Naive thymus-derived CD4-positive, alpha-beta T cell (primary cell): ENCODE measurements at regions of chr7 and their contacts with region 1.

Region 1: GRCh38 chr7:87152107-87152844 is at the start of gene DMTF1:
- DNase-seq: peak; percentile 76 to 85 (median 83)
- ATAC-seq: peak; percentile 91
- H3K4me3 ChIP-seq: peak within 1 kb of the TSS; percentile 72
- H3K4me3 Mint-ChIP-seq: peak within 1 kb of the TSS; percentile 87 to 99 (median 97)
- H3K27ac ChIP-seq: peak within 1 kb of the TSS; percentile 95
- H3K27ac Mint-ChIP-seq: peak within 1 kb of the TSS; percentile 96 to 100 (median 98)
- H3K4me1 ChIP-seq: peaks cover 27% of the 10 kb centered on the region in 2 donors
- H3K4me1 Mint-ChIP-seq: peaks cover 25 to 53% (median 47%) of the 10 kb centered on the region in 7 donors
- H3K27me3 ChIP-seq: no peaks in the 10 kb centered on the region
- H3K27me3 Mint-ChIP-seq: no peaks in the 10 kb centered on the region
- total RNA-seq, gene DMTF1: 118 to 159 (median 131) TPM

Region 2: DNA sequence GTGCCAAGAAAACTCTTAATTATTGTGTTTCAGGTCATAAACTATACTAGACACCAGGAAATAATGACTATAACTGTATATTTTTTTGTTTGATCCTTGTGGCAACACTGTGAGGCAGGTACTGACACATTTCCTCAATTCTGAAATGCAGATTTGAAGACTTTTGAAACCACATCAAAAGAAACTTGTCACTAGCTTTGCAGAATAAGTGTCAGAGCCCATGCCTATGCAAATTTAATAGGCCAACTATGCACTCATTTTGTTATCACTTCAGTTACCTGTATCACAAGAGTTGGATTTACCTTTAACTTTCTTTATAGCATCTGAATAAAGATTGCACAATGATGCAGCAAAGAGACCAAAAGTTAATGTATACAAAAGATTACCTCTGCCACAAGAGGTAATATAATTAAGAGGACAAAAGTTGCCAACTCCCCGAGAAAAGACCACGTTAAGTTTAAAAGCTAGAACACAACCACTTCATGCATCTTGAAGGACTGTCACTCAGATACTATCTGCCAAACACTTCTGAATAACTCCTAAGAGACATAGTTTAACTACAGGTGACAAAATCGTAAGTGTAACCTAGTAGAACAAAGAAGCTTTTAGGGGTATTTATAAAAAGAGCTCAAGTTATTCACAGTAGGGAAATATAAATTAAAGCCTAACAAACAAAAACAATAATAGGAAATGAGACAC is 173.3 kb before region 1 on chr7:
- CTCF ChIA-PET with region 1: no interaction called
- POLR2A ChIA-PET with region 1: interaction called, 3 read pairs
- intact Hi-C with region 1: loop called in 1 of 2 experiments (anchors 1 kb)
- DNase-seq: peak in 7 of 9 donors; percentile 69 to 92 (median 85)
- ATAC-seq: peak; percentile 91
- H3K4me3 ChIP-seq: no peak overlapping the region
- H3K4me3 Mint-ChIP-seq: peak overlapping the region in 8 of 10 donors; percentile 23 to 65 (median 50)
- H3K27ac ChIP-seq: peak overlapping the region; percentile 63
- H3K27ac Mint-ChIP-seq: peak overlapping the region in 8 of 9 donors; percentile 71 to 97 (median 87)
- H3K4me1 ChIP-seq: peaks cover 22 to 30% of the 10 kb centered on the region in 2 donors
- H3K4me1 Mint-ChIP-seq: peaks cover 14 to 53% (median 35%) of the 10 kb centered on the region in 7 donors
- H3K27me3 ChIP-seq: no peaks in the 10 kb centered on the region
- H3K27me3 Mint-ChIP-seq: no peaks in the 10 kb centered on the region

Region 3: GRCh38 chr7:87188930-87189329 is 36.7 kb after region 1 on chr7:
- CTCF ChIA-PET with region 1: no interaction called
- POLR2A ChIA-PET with region 1: interaction called, 9 read pairs
- intact Hi-C with region 1: loop called (anchors 2 to 5 kb)
- DNase-seq: no peak
- ATAC-seq: no peak
- H3K4me3 ChIP-seq: no peak overlapping the region
- H3K4me3 Mint-ChIP-seq: no peak overlapping the region
- H3K27ac ChIP-seq: no peak overlapping the region
- H3K27ac Mint-ChIP-seq: peak overlapping the region in 5 of 9 donors; percentile 7 to 69 (median 26)
- H3K4me1 ChIP-seq: no peaks in the 10 kb centered on the region
- H3K4me1 Mint-ChIP-seq: peaks cover 2 to 54% (median 30%) of the 10 kb centered on the region in 7 donors
- H3K27me3 ChIP-seq: no peaks in the 10 kb centered on the region
- H3K27me3 Mint-ChIP-seq: no peaks in the 10 kb centered on the region

Region 4: GRCh38 chr7:87231256-87231655 is 79.0 kb after region 1 on chr7:
- CTCF ChIA-PET with region 1: interaction called, 3 read pairs
- POLR2A ChIA-PET with region 1: interaction called, 4 read pairs
- intact Hi-C with region 1: loop called in 1 of 2 experiments (anchors 5 kb)
- DNase-seq: no peak
- ATAC-seq: no peak
- H3K4me3 ChIP-seq: no peak overlapping the region
- H3K4me3 Mint-ChIP-seq: no peak overlapping the region
- H3K27ac ChIP-seq: no peak overlapping the region
- H3K27ac Mint-ChIP-seq: no peak overlapping the region
- H3K4me1 ChIP-seq: no peaks in the 10 kb centered on the region
- H3K4me1 Mint-ChIP-seq: peaks cover 0 to 12% (median 4%) of the 10 kb centered on the region in 7 donors
- H3K27me3 ChIP-seq: no peaks in the 10 kb centered on the region
- H3K27me3 Mint-ChIP-seq: peaks cover 0 to 4% (median 0%) of the 10 kb centered on the region in 5 donors

Region 5: DNA sequence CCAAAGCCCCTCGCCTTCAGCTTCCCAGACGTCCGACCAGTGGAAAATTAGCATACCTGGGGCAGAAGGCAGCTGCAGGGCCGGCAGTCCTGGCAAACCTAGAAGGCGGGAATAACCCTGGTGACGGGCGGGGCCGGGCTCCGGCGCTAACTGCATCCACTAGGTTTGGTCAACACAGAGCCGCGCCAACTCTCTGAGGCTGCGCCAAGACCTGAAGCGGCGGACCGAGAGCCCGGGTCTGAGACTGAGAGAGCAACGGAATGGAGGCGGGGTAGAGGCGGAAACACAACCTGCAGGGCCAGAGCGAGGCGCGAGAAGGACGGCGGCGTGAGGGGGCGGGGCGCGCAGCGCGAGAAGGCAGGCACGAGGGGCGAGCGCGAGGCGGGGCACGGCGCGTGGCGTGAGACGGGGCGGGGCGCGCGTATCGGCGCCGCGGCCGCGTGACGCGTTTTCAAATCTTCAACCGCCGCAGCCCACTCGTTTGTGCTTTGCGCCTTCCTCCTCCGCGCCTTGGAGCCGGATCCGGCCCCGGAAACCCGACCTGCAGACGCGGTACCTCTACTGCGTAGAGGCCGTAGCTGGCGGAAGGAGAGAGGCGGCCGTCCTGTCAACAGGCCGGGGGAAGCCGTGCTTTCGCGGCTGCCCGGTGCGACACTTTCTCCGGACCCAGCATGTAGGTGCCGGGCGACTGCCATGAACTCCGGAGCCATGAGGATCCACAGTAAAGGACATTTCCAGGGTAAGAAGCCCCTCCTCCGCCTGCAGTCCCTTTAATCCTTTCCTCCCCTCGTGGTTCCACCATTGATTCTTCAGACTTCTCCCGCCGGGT is 724.0 kb after region 1 on chr7 and contains the starts of genes DBF4 and SLC25A40:
- CTCF ChIA-PET with region 1: no interaction called
- POLR2A ChIA-PET with region 1: interaction called, 4 read pairs
- intact Hi-C with region 1: loop called (anchors 1 kb)
- DNase-seq: peak; percentile 88 to 98 (median 95)
- ATAC-seq: peak; percentile 95
- H3K4me3 ChIP-seq: peak within 1 kb of the TSS; percentile 93
- H3K4me3 Mint-ChIP-seq: peak within 1 kb of the TSS; percentile 69 to 96 (median 93)
- H3K27ac ChIP-seq: peak within 1 kb of the TSS; percentile 92
- H3K27ac Mint-ChIP-seq: peak within 1 kb of the TSS; percentile 82 to 98 (median 97)
- H3K4me1 ChIP-seq: peaks cover 6 to 13% of the 10 kb centered on the region in 2 donors
- H3K4me1 Mint-ChIP-seq: peaks cover 27 to 64% (median 54%) of the 10 kb centered on the region in 7 donors
- H3K27me3 ChIP-seq: no peaks in the 10 kb centered on the region
- H3K27me3 Mint-ChIP-seq: no peaks in the 10 kb centered on the region
- total RNA-seq, gene DBF4: 31.2 to 46.5 (median 38.4) TPM
- total RNA-seq, gene SLC25A40: 15.2 to 50.2 (median 27.5) TPM